T-cell (primary cell): ENCODE measurements at regions of chr16 and their contacts with region 1.

Region 1: DNA sequence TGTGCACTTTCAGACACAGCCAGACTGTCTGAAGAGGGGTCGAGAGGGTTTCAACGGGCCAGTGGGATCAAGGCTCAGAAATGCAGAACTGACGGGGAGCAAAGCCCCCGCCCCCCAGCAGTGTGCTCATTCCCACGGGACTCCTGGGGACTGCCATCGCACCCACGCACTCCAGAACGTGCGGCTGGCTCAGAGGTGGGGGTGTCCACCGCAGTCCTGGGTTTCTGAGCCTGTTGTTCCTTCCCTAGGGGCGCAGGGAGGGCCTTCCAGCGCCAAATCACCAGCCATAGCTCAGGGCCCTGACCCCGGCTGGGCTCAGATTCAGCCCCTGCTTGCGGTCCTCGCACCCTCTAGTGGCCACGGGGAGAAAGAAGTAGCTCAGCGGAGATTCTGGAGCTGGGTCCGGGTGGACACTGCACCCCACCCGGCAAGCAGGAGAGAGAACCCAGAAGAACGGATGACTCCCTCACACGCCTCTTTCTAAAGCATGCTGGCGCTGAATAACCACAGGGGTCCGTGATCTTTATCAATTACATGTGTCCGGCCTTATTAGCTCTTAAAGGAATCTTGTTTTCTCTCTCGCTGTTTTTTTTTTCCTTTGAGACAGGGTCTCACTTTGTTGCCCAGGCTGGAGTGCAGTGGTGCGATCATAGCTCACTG is 45.0 kb upstream of the USP7 start:
- DNase-seq: peak; percentile 25 to 72 (median 52)
- ATAC-seq: peak; percentile 86 to 92 (median 90)
- H3K4me3 ChIP-seq: no peak overlapping the region
- H3K4me3 Mint-ChIP-seq: peak overlapping the region in 1 of 3 donors; percentile 53
- H3K27ac ChIP-seq: no peak overlapping the region
- H3K27ac Mint-ChIP-seq: peak overlapping the region in 1 of 2 donors; percentile 36
- H3K4me1 ChIP-seq: peaks cover 0 to 7% of the 10 kb centered on the region in 2 experiments
- H3K4me1 Mint-ChIP-seq: peaks cover 0 to 8% (median 7%) of the 10 kb centered on the region in 3 donors
- H3K27me3 ChIP-seq: peaks cover 0 to 49% of the 10 kb centered on the region in 2 experiments
- H3K27me3 Mint-ChIP-seq: peaks cover 14 to 25% of the 10 kb centered on the region in 2 donors

Region 2: DNA sequence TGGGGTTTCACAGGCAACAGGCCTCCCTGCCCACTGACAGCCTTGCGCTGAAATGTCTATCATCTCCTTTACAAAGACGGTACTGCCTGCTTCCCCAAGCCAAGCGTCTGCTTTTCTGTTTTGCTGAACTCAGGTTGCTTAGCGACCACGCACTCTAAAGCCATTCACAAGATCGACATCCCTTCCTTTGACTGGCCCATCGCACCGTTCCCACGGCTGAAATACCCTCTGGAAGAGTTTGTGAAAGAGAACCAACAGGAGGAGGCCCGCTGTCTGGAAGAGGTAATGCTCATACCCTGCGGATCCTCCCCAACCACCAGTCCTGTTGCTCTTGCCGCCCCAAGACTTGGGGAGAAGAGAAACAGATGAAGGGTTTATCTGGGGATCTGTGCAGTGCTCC is 240.0 kb before region 1 on chr16:
- CTCF ChIA-PET with region 1: interaction called in 1 of 2 experiments, 15 read pairs
- POLR2A ChIA-PET with region 1: no interaction called
- DNase-seq: no peak
- ATAC-seq: no peak
- H3K4me3 ChIP-seq: no peak overlapping the region
- H3K4me3 Mint-ChIP-seq: no peak overlapping the region
- H3K27ac ChIP-seq: no peak overlapping the region
- H3K27ac Mint-ChIP-seq: no peak overlapping the region
- H3K4me1 ChIP-seq: no peaks in the 10 kb centered on the region
- H3K4me1 Mint-ChIP-seq: no peaks in the 10 kb centered on the region
- H3K27me3 ChIP-seq: no peaks in the 10 kb centered on the region
- H3K27me3 Mint-ChIP-seq: no peaks in the 10 kb centered on the region

Region 3: GRCh38 chr16:8936421-8936820 is 72.3 kb before region 1 on chr16:
- CTCF ChIA-PET with region 1: interaction called, 3 to 14 read pairs
- POLR2A ChIA-PET with region 1: no interaction called
- DNase-seq: peak; percentile 36 to 77 (median 66)
- ATAC-seq: peak; percentile 95 to 98 (median 96)
- H3K4me3 ChIP-seq: no peak overlapping the region
- H3K4me3 Mint-ChIP-seq: peak overlapping the region in 2 of 3 donors; percentile 24 to 48
- H3K27ac ChIP-seq: no peak overlapping the region
- H3K27ac Mint-ChIP-seq: peak overlapping the region in 1 of 2 donors; percentile 50
- H3K4me1 ChIP-seq: peaks cover 22 to 56% of the 10 kb centered on the region in 2 experiments
- H3K4me1 Mint-ChIP-seq: peaks cover 81 to 95% (median 93%) of the 10 kb centered on the region in 3 donors
- H3K27me3 ChIP-seq: no peaks in the 10 kb centered on the region
- H3K27me3 Mint-ChIP-seq: no peaks in the 10 kb centered on the region